ENCODE measurements at regions of chr19 and their contacts with region 1.

Region 1: DNA sequence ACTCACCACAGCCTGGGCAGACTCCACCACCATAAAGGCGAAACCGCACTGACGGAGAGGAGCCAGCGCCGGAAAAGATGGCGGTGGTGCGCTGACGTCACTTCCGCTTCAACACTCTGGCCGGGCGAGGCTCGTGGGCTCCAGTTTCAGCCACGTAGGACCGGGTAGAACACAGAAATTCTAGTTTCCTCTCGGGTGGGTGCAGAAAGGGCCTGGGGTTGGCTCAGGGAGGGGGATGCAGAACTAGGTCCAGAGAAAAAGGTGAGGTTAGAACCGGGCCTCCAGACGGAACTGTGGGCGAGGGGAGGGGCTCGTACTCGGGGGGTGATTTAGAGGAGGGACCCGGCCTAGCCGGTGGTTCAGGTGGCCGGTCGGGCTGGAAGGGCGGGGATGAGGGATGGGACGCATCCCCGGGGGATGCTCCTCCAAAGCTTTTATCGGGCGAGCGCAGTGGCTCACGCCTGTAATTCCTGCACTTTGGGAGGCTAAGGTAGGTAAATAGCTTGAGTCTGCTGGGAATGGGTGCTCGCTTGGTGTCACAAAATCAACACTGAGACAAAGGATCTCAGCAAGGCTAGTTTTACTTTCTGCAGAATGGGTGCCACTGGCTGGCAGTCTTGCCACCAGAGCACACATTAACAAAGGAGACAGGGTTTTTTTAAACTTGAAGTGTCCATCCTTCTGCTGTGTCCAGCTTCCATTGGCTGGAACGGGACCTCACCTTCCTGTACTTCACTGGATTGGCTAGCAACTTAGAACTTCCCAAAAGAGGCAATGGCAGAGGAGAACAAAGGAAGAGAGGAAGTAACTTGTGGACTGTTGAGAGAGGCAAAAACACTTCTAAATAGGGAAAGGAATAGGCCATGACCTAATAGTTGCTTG is at the start of gene ZNF561:
- DNase-seq: peak; percentile 86
- H3K4me3 ChIP-seq: peak within 1 kb of the TSS; percentile 70 to 95
- H3K27ac ChIP-seq: peak within 1 kb of the TSS; percentile 84 to 96
- H3K4me1 ChIP-seq: peaks cover 5 to 6% of the 10 kb centered on the region in 2 experiments; a peak in 2 of 4 replicates
- H3K27me3 ChIP-seq: no peaks in the 10 kb centered on the region
- CTCF ChIP-seq: no peak
- EP300 ChIP-seq: no peak; a peak in 1 of 4 replicates
- RAD21 ChIP-seq: no peak
- polyA plus RNA-seq, gene ZNF561: 18.0 and 28.1 TPM in 2 replicates

Region 2: DNA sequence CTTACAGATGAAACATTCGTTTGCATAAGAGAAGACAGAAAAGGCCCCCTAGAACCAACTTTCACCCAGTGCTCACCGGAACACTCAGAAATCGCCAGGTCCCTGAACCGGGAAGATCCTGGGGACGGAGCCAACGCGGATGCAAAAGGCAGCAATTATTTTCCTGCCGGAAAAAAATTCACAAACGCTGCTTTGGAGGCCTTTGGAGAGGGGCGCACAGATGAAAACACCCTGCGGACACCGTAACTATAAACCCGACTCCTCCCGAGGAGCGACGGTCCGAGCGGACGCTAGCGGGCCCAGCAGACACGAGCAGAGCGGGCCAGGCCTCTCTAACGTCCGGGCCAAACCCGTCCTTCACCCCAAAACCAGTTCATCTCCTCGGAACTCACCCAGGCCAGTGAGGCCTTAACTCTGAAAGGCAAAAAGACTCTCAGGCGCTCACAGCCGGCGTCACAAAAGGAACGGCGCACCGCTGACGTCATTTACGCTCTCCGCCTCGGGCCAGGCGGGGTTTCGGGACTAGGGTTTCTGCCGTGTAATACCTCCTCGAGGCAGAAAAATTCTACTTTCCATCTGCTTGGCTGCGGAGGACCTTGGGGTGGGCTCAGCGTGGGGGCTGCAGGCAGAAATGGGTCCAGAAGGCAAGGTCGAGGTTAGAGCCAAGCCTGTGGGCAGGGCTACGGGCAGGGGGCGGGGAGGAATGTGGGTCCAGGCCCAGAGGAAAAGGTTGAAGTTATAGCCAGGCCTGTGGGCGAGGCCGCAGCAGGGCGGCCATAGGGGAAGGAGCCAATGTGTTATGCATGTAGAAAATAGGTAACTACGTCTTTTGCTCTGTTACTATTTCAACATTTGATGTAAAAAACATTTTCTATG is 83.0 kb before region 1 on chr19 and contains the start of gene ZNF426:
- CTCF ChIA-PET with region 1: no interaction called
- POLR2A ChIA-PET with region 1: no interaction called
- DNase-seq: peak; percentile 88
- H3K4me3 ChIP-seq: peak within 1 kb of the TSS; percentile 81 to 86
- H3K27ac ChIP-seq: peak within 1 kb of the TSS; percentile 83 to 91
- H3K4me1 ChIP-seq: no peaks in the 10 kb centered on the region
- H3K27me3 ChIP-seq: no peaks in the 10 kb centered on the region
- CTCF ChIP-seq: no peak
- EP300 ChIP-seq: peak in 1 of 2 experiments; percentile 17; a peak in 1 of 4 replicates
- RAD21 ChIP-seq: no peak
- polyA plus RNA-seq, gene ZNF426: 2.4 and 3.5 TPM in 2 replicates

Region 3: DNA sequence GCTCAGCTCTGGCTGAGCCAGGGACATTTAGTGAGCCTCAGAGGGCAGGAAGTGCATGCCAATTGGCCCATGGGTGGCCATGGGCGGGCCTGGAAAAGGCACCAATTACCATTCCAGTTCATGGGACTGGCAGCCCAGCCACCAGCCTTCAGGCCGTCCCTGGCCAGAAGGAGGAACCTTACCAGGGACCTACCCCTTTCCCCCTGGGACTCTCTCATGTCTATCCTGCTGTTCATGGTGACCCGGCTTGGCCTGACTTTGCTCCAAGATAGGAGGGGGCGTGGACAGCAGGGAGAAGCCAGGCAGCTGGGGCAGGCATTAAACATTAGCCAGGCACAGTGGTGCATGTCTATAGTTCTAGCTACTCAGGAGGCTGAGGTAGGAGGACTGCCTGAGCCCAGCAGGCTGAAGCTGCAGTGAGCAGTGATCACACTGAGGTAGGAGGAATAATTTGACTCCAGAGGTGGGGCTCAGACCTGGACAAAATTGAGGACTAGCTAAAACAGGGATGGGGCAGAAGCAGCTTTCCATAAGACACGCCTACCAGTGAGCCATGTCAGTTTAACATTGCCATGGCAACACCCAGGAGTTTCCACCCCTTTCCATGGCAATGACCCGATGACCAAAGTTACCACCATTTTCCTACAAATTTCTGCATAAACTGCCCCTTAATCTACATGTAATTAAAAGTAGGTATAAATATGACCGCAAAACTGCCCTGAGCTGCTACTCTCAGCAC is 68.7 kb before region 1 on chr19:
- CTCF ChIA-PET with region 1: no interaction called
- POLR2A ChIA-PET with region 1: no interaction called
- DNase-seq: no peak
- H3K4me3 ChIP-seq: no peak overlapping the region
- H3K27ac ChIP-seq: no peak overlapping the region
- H3K4me1 ChIP-seq: no peaks in the 10 kb centered on the region
- H3K27me3 ChIP-seq: no peaks in the 10 kb centered on the region
- CTCF ChIP-seq: no peak
- EP300 ChIP-seq: no peak
- RAD21 ChIP-seq: no peak

Region 4: GRCh38 chr19:9636018-9636417 is 14.6 kb after region 1 on chr19:
- CTCF ChIA-PET with region 1: interaction called, 17 read pairs
- POLR2A ChIA-PET with region 1: no interaction called
- DNase-seq: no peak
- H3K4me3 ChIP-seq: no peak overlapping the region
- H3K27ac ChIP-seq: no peak overlapping the region
- H3K4me1 ChIP-seq: no peaks in the 10 kb centered on the region
- H3K27me3 ChIP-seq: no peaks in the 10 kb centered on the region
- CTCF ChIP-seq: no peak
- EP300 ChIP-seq: no peak
- RAD21 ChIP-seq: no peak

Region 5: DNA sequence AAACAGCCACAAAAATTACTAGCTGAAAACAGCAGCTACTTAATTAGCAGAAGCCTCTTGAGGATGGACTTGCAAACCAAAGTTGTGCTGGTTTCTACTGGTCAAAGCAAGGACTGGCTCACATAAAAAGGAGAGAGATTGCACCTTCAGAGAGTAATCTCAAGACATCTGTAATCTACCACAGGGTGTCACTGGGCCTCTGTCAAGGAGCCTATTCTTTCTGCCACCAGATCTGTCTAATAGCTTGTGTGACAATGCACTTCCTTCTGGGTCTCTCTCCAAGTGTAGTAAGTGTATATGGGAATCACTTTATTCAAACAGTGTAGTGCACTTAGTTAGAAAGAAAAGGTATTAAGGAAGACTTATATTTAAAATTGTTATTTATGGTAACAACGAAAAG is 24.1 kb after region 1 on chr19:
- CTCF ChIA-PET with region 1: interaction called, 18 read pairs
- POLR2A ChIA-PET with region 1: interaction called, 4 read pairs
- DNase-seq: no peak
- H3K4me3 ChIP-seq: no peak overlapping the region
- H3K27ac ChIP-seq: no peak overlapping the region
- H3K4me1 ChIP-seq: no peaks in the 10 kb centered on the region
- H3K27me3 ChIP-seq: no peaks in the 10 kb centered on the region
- CTCF ChIP-seq: no peak
- EP300 ChIP-seq: no peak
- RAD21 ChIP-seq: no peak

Region 6: DNA sequence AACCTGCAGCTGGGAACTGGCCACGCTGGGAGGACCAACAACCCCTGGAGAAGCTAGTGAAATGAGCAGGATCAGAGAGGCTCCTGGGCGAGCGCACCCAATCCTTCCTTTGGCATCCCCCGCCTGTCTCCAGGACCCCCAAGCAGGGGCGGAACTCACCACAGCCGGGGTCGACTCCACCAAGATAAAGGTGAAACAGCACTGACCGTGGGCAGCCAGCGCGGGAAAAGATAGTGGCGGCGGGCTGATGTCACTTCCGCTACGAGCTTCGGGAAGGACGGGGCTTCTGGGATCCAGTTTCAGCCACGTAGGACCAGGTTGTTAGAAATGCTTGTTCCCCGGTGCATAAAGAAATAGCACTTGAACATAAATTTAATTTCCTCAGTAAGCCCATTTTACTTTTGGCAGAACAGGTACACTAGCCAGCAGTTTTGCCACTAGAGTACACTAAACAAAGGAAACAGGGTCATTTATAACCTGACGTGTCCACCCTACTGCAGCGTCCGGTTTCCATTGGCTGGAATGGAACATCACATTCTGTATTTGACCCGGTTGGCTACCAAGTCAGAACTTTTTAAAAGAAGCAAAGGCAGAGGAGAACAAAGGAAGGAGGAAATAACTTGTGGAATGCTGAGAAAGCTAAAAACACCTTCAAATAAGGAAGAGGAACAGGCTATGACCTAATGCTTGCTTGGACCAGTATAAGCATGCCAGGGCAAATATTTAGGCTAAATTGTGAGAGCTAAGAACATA is 79.0 kb after region 1 on chr19:
- CTCF ChIA-PET with region 1: no interaction called
- POLR2A ChIA-PET with region 1: no interaction called
- DNase-seq: no peak
- H3K4me3 ChIP-seq: no peak overlapping the region
- H3K27ac ChIP-seq: no peak overlapping the region
- H3K4me1 ChIP-seq: no peaks in the 10 kb centered on the region
- H3K27me3 ChIP-seq: no peaks in the 10 kb centered on the region
- CTCF ChIP-seq: no peak
- EP300 ChIP-seq: no peak
- RAD21 ChIP-seq: no peak

Region 7: DNA sequence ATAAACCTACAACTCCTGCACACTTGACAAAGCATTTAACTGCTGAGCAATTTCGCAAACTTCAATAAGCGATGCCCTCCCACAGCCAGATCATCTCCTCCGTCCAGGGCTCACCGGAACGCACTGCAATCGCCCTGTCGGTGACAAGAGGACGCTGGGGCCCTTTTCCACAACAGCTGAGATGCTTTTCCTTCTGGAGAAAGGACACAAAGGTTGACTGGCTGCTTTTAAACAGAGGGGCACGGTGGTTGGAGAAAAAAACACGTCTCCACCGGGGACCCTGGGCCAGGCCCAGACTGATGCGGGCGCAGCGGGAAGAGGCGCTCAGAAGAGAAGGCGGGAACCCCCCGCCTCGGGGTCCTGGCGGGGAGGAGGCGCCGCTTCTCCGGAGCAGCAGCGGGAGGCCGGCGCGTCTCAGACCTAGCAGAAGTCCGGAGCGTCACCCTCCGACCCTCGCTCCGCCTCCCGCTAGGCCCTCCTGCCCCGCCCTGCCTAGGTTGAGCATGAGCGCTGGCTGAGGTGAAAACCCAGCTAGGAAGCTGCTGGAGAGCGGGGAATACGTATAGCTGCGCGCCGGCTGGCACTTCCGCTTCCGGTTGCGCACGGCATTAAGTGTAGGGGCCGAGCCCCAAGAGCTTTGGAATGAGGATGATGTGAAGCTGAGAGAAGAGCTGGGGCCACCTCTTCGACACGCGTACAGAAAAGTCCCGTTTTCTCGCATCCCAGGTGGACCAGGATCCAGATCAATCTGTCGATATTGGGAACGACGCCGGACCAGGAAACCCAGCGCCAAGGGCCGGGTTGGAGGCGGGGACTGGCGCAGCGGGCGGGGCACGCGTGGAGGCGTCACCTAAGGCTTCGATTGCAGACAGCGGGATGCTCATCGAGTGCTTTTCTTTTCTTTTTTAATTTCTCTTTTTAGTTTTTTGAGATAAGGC is 147.0 kb after region 1 on chr19 and contains the start of gene ZNF846:
- CTCF ChIA-PET with region 1: interaction called, 10 read pairs
- POLR2A ChIA-PET with region 1: interaction called, 15 read pairs
- DNase-seq: peak; percentile 95
- H3K4me3 ChIP-seq: peak within 1 kb of the TSS; percentile 62 to 83
- H3K27ac ChIP-seq: peak within 1 kb of the TSS; percentile 85 to 92
- H3K4me1 ChIP-seq: no peaks in the 10 kb centered on the region; a peak in 1 of 4 replicates
- H3K27me3 ChIP-seq: no peaks in the 10 kb centered on the region
- CTCF ChIP-seq: no peak
- EP300 ChIP-seq: no peak
- RAD21 ChIP-seq: no peak; the same call in 1 of the 2 replicates
- polyA plus RNA-seq, gene ZNF846: 6.7 and 7.5 TPM in 2 replicates

Region 8: DNA sequence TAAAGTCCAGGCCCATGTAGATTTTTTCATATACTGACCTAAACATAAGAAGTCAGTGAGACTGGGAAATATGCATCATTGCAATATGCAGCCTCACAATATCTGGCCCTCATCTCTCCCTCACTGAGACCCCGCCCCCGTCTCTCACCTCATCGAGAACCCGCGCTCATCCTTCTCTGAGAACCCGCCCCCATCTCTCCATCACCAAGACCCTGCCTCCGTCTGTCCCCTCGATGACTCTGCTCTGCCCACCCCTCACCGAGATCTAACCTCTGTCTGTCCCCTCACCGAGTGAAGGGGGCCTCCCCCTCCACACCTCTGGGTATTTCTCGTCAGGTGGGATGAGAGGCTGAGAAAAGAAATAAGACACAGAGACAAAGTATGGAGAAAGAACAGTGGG is 167.7 kb after region 1 on chr19:
- CTCF ChIA-PET with region 1: interaction called, 20 read pairs
- POLR2A ChIA-PET with region 1: interaction called, 5 read pairs
- DNase-seq: no peak
- H3K4me3 ChIP-seq: no peak overlapping the region
- H3K27ac ChIP-seq: no peak overlapping the region
- H3K4me1 ChIP-seq: peaks cover 4 to 7% of the 10 kb centered on the region in 2 experiments; a peak in 1 of 4 replicates
- H3K27me3 ChIP-seq: no peaks in the 10 kb centered on the region
- CTCF ChIP-seq: no peak
- EP300 ChIP-seq: no peak
- RAD21 ChIP-seq: no peak

Region 9: GRCh38 chr19:9796113-9796773 is 174.8 kb after region 1 on chr19:
- CTCF ChIA-PET with region 1: interaction called, 30 read pairs
- POLR2A ChIA-PET with region 1: interaction called, 5 read pairs
- DNase-seq: peak; percentile 76
- H3K4me3 ChIP-seq: peak overlapping the region in 1 of 2 experiments; percentile 2; a peak in 1 of 4 replicates
- H3K27ac ChIP-seq: no peak overlapping the region; a peak in 2 of 4 replicates
- H3K4me1 ChIP-seq: peaks cover under 1% of the 10 kb centered on the region in 2 experiments; a peak in 1 of 4 replicates
- H3K27me3 ChIP-seq: no peaks in the 10 kb centered on the region
- CTCF ChIP-seq: peak; percentile 88
- EP300 ChIP-seq: peak in 1 of 2 experiments; percentile 37; a peak in 1 of 4 replicates
- RAD21 ChIP-seq: peak; percentile 97

Region 10: DNA sequence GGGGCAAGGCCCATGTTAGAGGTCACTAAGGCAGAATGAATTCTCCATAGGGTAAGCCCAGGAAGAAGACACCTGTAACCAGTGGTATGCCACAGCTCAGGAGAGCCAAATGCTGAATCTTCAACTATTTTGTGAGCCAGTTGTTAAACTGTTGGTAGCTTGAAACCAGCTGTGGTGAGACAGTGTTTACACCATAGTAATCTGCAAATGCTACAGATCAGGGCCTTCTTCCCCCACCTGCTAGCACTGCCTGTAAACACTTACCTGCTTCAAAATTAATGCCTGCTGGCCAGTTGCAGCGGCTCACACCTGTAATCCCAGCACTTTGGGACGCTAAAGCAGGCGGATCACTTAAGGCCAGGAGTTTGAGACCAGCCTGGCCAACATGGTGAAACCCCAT is 185.4 kb after region 1 on chr19:
- CTCF ChIA-PET with region 1: interaction called, 13 read pairs
- POLR2A ChIA-PET with region 1: no interaction called
- DNase-seq: no peak
- H3K4me3 ChIP-seq: no peak overlapping the region
- H3K27ac ChIP-seq: no peak overlapping the region
- H3K4me1 ChIP-seq: no peaks in the 10 kb centered on the region
- H3K27me3 ChIP-seq: no peaks in the 10 kb centered on the region
- CTCF ChIP-seq: no peak
- EP300 ChIP-seq: no peak
- RAD21 ChIP-seq: no peak